ENCODE measurements at regions of chr11 and their contacts with region 1.

Region 1: DNA sequence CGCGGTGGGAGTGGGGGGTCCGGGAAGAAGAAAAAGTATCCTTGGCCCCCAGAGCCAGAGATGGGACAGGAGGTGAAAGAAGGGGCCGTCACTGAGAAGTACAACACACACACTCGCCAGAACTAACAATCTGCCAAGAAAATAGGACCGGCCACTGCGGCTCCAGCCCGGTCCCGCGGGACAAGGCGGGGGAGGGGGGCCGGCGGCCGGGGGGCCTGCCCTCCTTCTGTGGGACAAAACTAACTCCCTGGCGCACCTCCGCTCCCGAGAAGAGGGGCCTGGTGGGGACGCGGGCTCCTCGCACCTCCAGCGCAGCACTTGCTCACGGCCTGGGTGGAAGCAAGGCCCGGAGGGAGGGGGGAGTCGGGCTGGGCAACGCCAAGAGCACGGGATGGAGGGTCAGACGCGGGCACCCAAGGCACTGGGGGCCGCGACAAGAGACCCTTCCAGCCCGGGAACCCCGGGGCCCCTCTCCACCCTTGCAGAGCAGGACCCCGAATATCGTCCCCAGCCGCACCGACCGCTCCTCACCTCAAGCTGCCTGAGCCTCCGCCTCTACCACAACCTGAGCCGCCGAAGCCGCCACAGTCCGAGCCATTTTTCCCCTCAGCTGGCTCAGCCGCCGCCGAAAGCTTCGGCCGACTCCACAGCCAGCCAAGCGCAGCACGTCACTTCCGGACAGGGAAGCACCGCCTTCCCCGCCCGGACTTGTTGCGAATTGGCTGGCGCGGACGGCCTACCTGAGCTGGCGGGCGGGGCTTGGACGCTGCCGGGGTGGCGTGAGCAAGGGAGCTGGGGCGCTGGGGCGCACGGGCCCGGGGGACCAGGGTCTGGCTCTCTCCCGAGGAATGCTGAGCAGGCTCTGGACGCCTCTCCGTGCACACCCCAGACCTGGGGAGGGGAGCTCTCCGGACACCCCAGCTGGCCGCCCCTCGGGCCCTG is at the start of gene PIK3C2A:
- H3K4me3 ChIP-seq: peak within 1 kb of the TSS; percentile 92
- H3K27ac ChIP-seq: peak within 1 kb of the TSS; percentile 84
- H3K4me1 ChIP-seq: peaks cover 4% of the 10 kb centered on the region; the same call in 1 of the 2 replicates
- CTCF ChIP-seq: no peak

Region 2: GRCh38 chr11:17276236-17277023 is 68.8 kb after region 1 on chr11 and contains the start of gene NUCB2:
- CTCF ChIA-PET with region 1: no interaction called
- POLR2A ChIA-PET with region 1: interaction called, 10 read pairs
- H3K4me3 ChIP-seq: peak within 1 kb of the TSS; percentile 93
- H3K27ac ChIP-seq: peak within 1 kb of the TSS; percentile 42; the same call in 1 of the 2 replicates
- H3K4me1 ChIP-seq: no peaks in the 10 kb centered on the region
- CTCF ChIP-seq: no peak

Measured in HEK293 (cell line).